ENCODE measurements at regions of chr2 and their contacts with region 1.

Region 1: DNA sequence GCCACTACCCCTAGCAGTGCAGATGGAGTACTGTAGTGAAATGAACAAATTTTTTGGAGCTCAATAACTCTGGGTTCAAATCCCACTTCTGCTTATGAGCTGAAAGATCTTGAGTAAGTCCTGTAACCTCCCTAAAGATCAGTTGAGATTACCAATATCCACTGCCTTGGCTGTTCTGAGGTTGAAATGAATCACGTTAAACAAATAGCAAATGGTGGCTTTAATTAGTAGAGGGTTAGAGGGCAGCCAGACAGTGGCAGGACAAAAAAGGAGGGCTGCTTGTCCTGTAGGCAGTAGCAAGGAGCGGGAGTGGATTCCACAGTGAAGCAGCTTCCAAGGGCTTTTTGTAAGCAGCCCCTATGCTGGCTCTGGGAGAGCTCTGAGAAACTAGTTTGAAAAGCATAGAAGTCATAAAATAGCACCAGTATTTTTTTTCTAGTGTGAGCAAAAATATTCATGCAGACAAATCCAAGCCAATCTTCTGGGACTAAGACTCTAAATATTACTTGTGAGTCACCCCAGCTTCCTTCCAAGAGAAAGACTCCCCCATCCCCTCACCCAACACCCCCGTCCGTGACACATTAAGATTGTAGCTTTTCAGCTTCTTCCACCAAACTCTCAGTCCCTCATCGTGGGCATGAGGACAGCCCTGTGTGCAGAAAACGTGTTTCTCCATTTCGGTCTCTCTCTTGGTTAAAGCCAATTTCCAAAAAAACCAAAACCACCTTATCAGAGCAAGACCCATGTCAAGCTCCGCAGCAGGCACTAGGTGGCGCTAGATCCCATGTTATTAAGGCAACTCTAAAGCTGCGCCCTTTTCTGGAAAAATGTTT is 123.5 kb upstream of the LGALSL start:
- DNase-seq: peak; percentile 84
- ATAC-seq: no peak
- H3K4me3 Mint-ChIP-seq: peak overlapping the region; percentile 41
- H3K27ac Mint-ChIP-seq: peak overlapping the region; percentile 27
- H3K4me1 Mint-ChIP-seq: peaks cover 39% of the 10 kb centered on the region
- H3K27me3 Mint-ChIP-seq: no peaks in the 10 kb centered on the region
- CTCF ChIP-seq: peak; percentile 93

Region 2: GRCh38 chr2:63841254-63842022 is 489.1 kb before region 1 on chr2 and contains the start of gene UGP2:
- CTCF ChIA-PET with region 1: no interaction called
- POLR2A ChIA-PET with region 1: no interaction called
- intact Hi-C with region 1: loop called (anchors 10 kb)
- DNase-seq: peak; percentile 94
- ATAC-seq: peak; percentile 77
- H3K4me3 Mint-ChIP-seq: peak within 1 kb of the TSS; percentile 86
- H3K27ac Mint-ChIP-seq: peak within 1 kb of the TSS; percentile 100
- H3K4me1 Mint-ChIP-seq: peaks cover 45% of the 10 kb centered on the region
- H3K27me3 Mint-ChIP-seq: no peaks in the 10 kb centered on the region
- CTCF ChIP-seq: peak; percentile 9
- total RNA-seq, gene UGP2: 81.4 to 83.7 TPM

Region 3: DNA sequence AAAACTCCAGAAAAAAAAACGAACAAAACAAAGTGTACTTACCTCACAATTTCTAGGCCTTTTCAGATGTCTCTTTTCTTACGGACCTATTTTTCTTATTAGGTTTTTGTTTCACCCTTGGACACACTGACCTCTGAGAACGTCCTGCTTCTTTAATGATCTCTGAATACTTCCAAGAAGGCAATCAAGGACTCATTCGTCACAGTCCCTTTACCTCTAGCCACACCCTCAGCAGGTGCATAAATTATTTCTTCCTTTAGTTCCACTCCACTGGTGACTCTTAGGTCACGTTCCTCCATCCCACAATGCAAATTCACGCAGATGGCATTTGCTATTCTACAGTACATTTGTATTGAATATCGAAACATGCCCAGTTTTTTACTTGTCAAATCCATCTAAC is 208.1 kb before region 1 on chr2:
- CTCF ChIA-PET with region 1: interaction called, 18 read pairs
- POLR2A ChIA-PET with region 1: interaction called, 3 read pairs
- intact Hi-C with region 1: no loop called
- DNase-seq: no peak
- ATAC-seq: no peak
- H3K4me3 Mint-ChIP-seq: no peak overlapping the region
- H3K27ac Mint-ChIP-seq: no peak overlapping the region
- H3K4me1 Mint-ChIP-seq: peaks cover 55% of the 10 kb centered on the region
- H3K27me3 Mint-ChIP-seq: no peaks in the 10 kb centered on the region
- CTCF ChIP-seq: no peak

Region 4: DNA sequence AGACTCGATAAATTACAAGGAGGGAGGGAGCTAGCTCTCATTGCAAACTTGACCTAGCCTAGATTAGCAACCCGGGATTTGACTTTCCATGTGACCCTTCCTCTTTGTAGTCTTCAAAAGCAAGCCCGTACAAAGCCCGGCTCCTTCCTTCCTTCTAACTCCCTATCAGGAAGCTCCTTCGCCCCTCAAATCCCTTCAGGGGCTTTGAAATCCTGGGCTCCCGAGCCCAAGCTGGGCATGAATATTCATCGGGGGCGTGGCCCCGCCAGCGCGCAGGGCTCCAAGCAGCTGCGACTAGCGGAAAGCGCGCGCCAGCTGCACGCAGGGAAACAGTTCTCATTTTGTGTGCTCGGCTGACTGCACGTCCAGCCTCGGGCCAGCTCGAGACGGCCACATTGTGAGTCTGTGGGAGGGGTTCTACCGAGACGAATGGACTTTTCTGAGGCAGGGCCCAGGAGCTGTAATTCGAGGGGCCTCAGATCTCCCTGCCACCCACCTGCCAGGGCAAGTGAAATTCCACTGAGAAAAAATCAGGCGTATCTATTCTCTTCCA is 102.3 kb before region 1 on chr2:
- CTCF ChIA-PET with region 1: interaction called, 15 read pairs
- POLR2A ChIA-PET with region 1: interaction called, 5 read pairs
- intact Hi-C with region 1: no loop called
- DNase-seq: peak; percentile 77
- ATAC-seq: peak; percentile 90
- H3K4me3 Mint-ChIP-seq: peak overlapping the region; percentile 81
- H3K27ac Mint-ChIP-seq: peak overlapping the region; percentile 88
- H3K4me1 Mint-ChIP-seq: peaks cover 20% of the 10 kb centered on the region
- H3K27me3 Mint-ChIP-seq: peaks cover 1% of the 10 kb centered on the region
- CTCF ChIP-seq: no peak

Region 5: DNA sequence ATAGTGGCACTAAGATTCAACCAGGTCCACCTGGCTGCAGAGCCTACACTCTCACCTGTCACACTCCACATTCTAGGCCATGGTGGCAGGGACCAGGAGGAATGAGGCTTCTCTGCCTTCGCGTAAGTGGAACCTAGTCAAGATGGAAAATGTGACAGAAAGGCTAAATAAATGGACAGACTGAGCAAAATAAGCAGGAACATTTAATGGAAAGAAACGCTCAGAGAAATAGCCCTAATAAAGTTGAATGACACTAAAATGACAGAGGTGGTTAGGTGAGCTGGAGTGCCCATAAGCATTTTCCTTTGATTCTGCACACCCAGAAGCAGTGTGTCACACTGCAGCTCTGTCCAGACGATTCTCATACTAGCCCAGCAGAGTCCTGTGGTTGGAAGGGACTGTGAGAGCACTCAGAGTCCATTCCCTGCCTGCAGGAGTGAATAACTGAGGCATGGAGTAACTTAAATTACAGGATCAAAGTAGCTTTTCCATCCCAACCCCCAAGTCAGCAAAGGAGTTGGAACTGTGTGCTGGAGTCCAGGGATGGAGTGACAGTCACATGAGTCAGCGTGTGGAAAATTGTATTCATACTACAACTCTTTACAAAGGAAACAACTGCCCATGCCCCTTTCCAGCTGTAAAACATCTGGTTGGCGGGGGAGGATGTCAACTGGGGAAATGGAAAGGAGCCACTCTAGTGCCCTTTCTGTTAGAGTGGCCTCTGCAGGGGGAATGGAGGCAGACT is 18.1 kb after region 1 on chr2:
- CTCF ChIA-PET with region 1: interaction called, 18 read pairs
- POLR2A ChIA-PET with region 1: no interaction called
- intact Hi-C with region 1: no loop called
- DNase-seq: no peak
- ATAC-seq: no peak
- H3K4me3 Mint-ChIP-seq: no peak overlapping the region
- H3K27ac Mint-ChIP-seq: no peak overlapping the region
- H3K4me1 Mint-ChIP-seq: no peaks in the 10 kb centered on the region
- H3K27me3 Mint-ChIP-seq: peaks cover 1% of the 10 kb centered on the region
- CTCF ChIP-seq: no peak

Region 6: DNA sequence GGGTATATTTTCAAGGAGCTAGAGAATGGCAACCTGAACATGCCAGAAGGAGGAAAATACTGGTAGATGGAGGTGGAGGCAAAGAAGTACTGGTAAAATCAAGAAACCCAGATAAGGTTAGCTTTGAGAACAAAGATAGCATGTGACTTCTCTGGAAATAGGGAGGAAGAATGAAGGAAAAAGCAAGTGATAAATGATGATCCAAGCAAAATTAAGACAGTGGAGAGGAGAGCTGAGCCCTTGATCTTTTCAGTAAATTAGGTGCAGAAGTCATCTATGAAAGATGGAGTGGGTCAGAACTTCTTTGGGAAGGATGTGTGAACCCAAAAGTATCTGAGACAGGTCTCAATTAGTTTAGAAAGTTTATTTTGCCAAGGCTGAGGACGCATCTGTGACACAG is 167.9 kb after region 1 on chr2:
- CTCF ChIA-PET with region 1: interaction called, 12 read pairs
- POLR2A ChIA-PET with region 1: interaction called, 3 read pairs
- intact Hi-C with region 1: no loop called
- DNase-seq: no peak
- ATAC-seq: no peak
- H3K4me3 Mint-ChIP-seq: no peak overlapping the region
- H3K27ac Mint-ChIP-seq: no peak overlapping the region
- H3K4me1 Mint-ChIP-seq: peaks cover 2% of the 10 kb centered on the region
- H3K27me3 Mint-ChIP-seq: peaks cover 9% of the 10 kb centered on the region
- CTCF ChIP-seq: no peak

Region 7: GRCh38 chr2:64644177-64645004 is 313.9 kb after region 1 on chr2:
- CTCF ChIA-PET with region 1: interaction called, 10 read pairs
- POLR2A ChIA-PET with region 1: interaction called, 3 read pairs
- intact Hi-C with region 1: no loop called
- DNase-seq: peak; percentile 82
- ATAC-seq: peak; percentile 75
- H3K4me3 Mint-ChIP-seq: peak overlapping the region; percentile 82
- H3K27ac Mint-ChIP-seq: peak overlapping the region; percentile 90
- H3K4me1 Mint-ChIP-seq: peaks cover 89% of the 10 kb centered on the region
- H3K27me3 Mint-ChIP-seq: no peaks in the 10 kb centered on the region
- CTCF ChIP-seq: no peak

Region 8: DNA sequence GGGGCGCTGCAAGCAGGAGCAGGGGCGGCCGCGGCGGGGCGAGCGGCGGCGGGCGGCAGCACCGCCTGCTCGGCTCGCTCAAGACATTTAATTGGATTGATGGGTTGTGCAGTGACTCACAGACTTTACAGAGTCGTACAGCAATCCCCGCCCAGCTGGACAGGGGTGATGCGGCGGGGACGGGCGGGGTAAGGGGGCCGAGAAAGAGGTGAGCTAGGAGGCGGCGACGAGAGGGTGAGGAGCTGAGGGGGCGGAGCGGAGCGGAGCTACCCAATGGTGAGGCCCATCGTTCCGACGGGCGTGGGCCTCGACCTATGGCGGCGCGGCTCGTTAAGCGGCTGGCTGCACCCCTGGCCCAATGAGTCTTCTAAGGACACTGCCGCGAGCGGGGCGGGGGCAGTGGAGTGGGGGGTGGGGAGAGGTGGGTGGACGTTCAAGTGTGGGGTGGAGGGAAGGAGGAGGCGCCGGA is 420.4 kb after region 1 on chr2:
- CTCF ChIA-PET with region 1: no interaction called
- POLR2A ChIA-PET with region 1: no interaction called
- intact Hi-C with region 1: no loop called
- DNase-seq: peak; percentile 99
- ATAC-seq: peak; percentile 86
- H3K4me3 Mint-ChIP-seq: peak overlapping the region; percentile 93
- H3K27ac Mint-ChIP-seq: peak overlapping the region; percentile 97
- H3K4me1 Mint-ChIP-seq: peaks cover 29% of the 10 kb centered on the region
- H3K27me3 Mint-ChIP-seq: no peaks in the 10 kb centered on the region
- CTCF ChIP-seq: no peak